Ascending aorta (tissue), 2 donors: ENCODE measurements at regions of chr19 and their contacts with region 1.

Region 1: DNA sequence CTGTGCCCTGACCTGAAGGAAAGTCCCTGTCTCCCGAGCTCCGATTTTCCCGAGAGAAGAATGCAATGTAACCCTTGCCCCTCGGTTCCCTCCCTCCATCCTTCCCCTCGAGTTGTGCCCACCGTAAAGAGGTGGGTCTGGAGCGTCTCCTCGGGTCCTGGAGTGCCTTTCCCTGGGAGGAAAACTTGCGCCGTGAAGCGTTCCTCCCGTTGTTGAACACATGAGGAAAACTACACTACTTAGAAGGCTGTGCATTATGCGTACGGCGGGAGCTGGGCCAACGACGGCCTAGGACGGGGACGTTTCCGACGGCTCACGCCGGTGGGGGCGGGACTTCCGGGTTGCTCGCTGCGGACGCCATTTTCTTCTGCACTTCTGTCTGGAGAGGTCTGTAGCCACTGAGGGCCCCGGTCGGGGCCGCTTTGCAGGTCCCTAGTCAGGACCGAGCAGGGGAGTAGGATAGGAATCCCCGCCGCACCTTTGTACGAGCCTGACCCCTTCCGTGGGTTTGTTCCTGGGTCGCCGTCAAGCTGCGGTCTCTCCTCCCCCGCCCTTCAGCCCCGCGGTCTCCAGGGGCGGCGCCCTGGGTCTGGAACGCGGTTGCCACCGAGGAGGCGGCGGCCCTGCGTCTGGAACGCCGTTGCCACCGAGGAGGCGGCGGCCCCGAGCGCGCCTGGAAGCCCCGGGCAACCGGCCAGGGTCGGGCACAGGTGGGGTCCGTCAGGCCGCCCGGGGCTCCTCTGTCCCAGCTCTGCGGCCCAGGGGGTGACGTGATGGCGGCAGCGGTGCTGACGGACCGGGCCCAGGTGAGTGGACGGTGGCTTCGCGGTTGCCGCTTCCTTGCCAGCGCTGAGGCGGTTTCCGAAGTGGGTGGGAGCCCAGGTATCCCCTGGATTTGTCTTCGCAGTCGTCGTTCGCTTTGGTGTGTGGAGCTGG is at the start of gene ZNF264:
- DNase-seq: peak; percentile 47 to 93
- H3K4me3 ChIP-seq: peak within 1 kb of the TSS; percentile 95 to 100
- H3K27ac ChIP-seq: peak within 1 kb of the TSS; percentile 85 to 91
- H3K4me1 ChIP-seq: peaks cover 0 to 8% of the 10 kb centered on the region in 2 donors
- H3K27me3 ChIP-seq: no peaks in the 10 kb centered on the region
- CTCF ChIP-seq: no peak
- total RNA-seq, gene ZNF264: 183 TPM

Region 2: GRCh38 chr19:57123882-57124281 is 67.5 kb before region 1 on chr19:
- intact Hi-C with region 1: no loop called
- DNase-seq: no peak
- H3K4me3 ChIP-seq: no peak overlapping the region
- H3K27ac ChIP-seq: no peak overlapping the region
- H3K4me1 ChIP-seq: no peaks in the 10 kb centered on the region
- H3K27me3 ChIP-seq: no peaks in the 10 kb centered on the region
- CTCF ChIP-seq: no peak

Region 3: GRCh38 chr19:57171551-57172081 is 19.8 kb before region 1 on chr19:
- intact Hi-C with region 1: loop called (anchors 2 kb)
- DNase-seq: peak in 1 of 2 donors; percentile 63
- H3K4me3 ChIP-seq: peak overlapping the region; percentile 51 to 59
- H3K27ac ChIP-seq: peak overlapping the region in 1 of 2 donors; percentile 62
- H3K4me1 ChIP-seq: no peaks in the 10 kb centered on the region
- H3K27me3 ChIP-seq: no peaks in the 10 kb centered on the region
- CTCF ChIP-seq: no peak

Region 4: GRCh38 chr19:57240311-57241090 is 49.1 kb after region 1 on chr19 and contains the start of gene ZNF805:
- intact Hi-C with region 1: loop called (anchors 5 kb)
- DNase-seq: peak; percentile 80 to 97
- H3K4me3 ChIP-seq: peak within 1 kb of the TSS; percentile 84 to 91
- H3K27ac ChIP-seq: peak within 1 kb of the TSS; percentile 87 to 97
- H3K4me1 ChIP-seq: peaks cover 0 to 8% of the 10 kb centered on the region in 2 donors
- H3K27me3 ChIP-seq: no peaks in the 10 kb centered on the region
- CTCF ChIP-seq: peak in 1 of 3 experiments; percentile 13
- total RNA-seq, gene ZNF805: 22.8 TPM

Region 5: GRCh38 chr19:57279418-57280066 is 88.1 kb after region 1 on chr19:
- intact Hi-C with region 1: no loop called
- DNase-seq: peak; percentile 81 to 96
- H3K4me3 ChIP-seq: peak overlapping the region; percentile 93 to 98
- H3K27ac ChIP-seq: peak overlapping the region; percentile 99 to 100
- H3K4me1 ChIP-seq: peaks cover 11 to 12% of the 10 kb centered on the region in 2 donors
- H3K27me3 ChIP-seq: no peaks in the 10 kb centered on the region
- CTCF ChIP-seq: peak in 2 of 3 experiments; percentile 8 to 43